Stomach (tissue), 19 donors: ENCODE measurements at regions of chr5 and their contacts with region 1.

Region 1: GRCh38 chr5:5037674-5038073 is 102.5 kb upstream of the ADAMTS16 start:
- DNase-seq: no peak
- H3K4me3 ChIP-seq: no peak overlapping the region
- H3K27ac ChIP-seq: no peak overlapping the region
- H3K4me1 ChIP-seq: no peaks in the 10 kb centered on the region
- H3K27me3 ChIP-seq: no peaks in the 10 kb centered on the region
- CTCF ChIP-seq: no peak
- EP300 ChIP-seq: no peak
- POLR2A ChIP-seq: no peak

Region 2: GRCh38 chr5:4542145-4542778 is 495.4 kb before region 1 on chr5:
- intact Hi-C with region 1: loop called (anchors 10 kb)
- DNase-seq: no peak
- H3K4me3 ChIP-seq: no peak overlapping the region
- H3K27ac ChIP-seq: no peak overlapping the region
- H3K4me1 ChIP-seq: no peaks in the 10 kb centered on the region
- H3K27me3 ChIP-seq: no peaks in the 10 kb centered on the region
- CTCF ChIP-seq: no peak
- EP300 ChIP-seq: no peak
- POLR2A ChIP-seq: no peak

Region 3: GRCh38 chr5:5089895-5090649 is 52.4 kb after region 1 on chr5:
- intact Hi-C with region 1: no loop called
- DNase-seq: no peak
- H3K4me3 ChIP-seq: no peak overlapping the region
- H3K27ac ChIP-seq: no peak overlapping the region
- H3K4me1 ChIP-seq: no peaks in the 10 kb centered on the region
- H3K27me3 ChIP-seq: no peaks in the 10 kb centered on the region
- CTCF ChIP-seq: no peak
- EP300 ChIP-seq: no peak
- POLR2A ChIP-seq: no peak

Region 4: GRCh38 chr5:5158472-5158895 is 120.8 kb after region 1 on chr5:
- intact Hi-C with region 1: no loop called
- DNase-seq: no peak
- H3K4me3 ChIP-seq: no peak overlapping the region
- H3K27ac ChIP-seq: peak overlapping the region in 4 of 5 donors; percentile 25 to 68 (median 52)
- H3K4me1 ChIP-seq: peaks cover 0 to 14% (median 4%) of the 10 kb centered on the region in 4 donors
- H3K27me3 ChIP-seq: no peaks in the 10 kb centered on the region
- CTCF ChIP-seq: no peak
- EP300 ChIP-seq: no peak
- POLR2A ChIP-seq: no peak

Region 5: GRCh38 chr5:5313101-5313635 is 275.5 kb after region 1 on chr5:
- intact Hi-C with region 1: no loop called
- DNase-seq: no peak
- H3K4me3 ChIP-seq: no peak overlapping the region
- H3K27ac ChIP-seq: no peak overlapping the region
- H3K4me1 ChIP-seq: no peaks in the 10 kb centered on the region
- H3K27me3 ChIP-seq: no peaks in the 10 kb centered on the region
- CTCF ChIP-seq: no peak
- EP300 ChIP-seq: no peak
- POLR2A ChIP-seq: no peak